ENCODE measurements at regions of chr1 and their contacts with region 1.

Region 1: GRCh38 chr1:212586206-212587015 is 22.1 kb upstream of the ATF3 start:
- DNase-seq: peak; percentile 58
- ATAC-seq: peak; percentile 97
- H3K4me3 ChIP-seq: no peak overlapping the region
- H3K27ac ChIP-seq: peak overlapping the region; percentile 45
- H3K4me1 ChIP-seq: peaks cover 15% of the 10 kb centered on the region
- H3K27me3 ChIP-seq: no peaks in the 10 kb centered on the region
- CTCF ChIP-seq: no peak
- EP300 ChIP-seq: peak; percentile 80 to 83; a peak in 2 of 4 replicates
- POLR2A ChIP-seq: no peak
- RAD21 ChIP-seq: peak; percentile 31; the same call in 1 of the 2 replicates

Region 2: GRCh38 chr1:212558693-212559480 is 27.5 kb before region 1 on chr1:
- CTCF ChIA-PET with region 1: no interaction called
- POLR2A ChIA-PET with region 1: interaction called, 5 read pairs
- RAD21 ChIA-PET with region 1: interaction called, 8 read pairs
- SMC1A ChIA-PET with region 1: interaction called, 10 read pairs
- in situ Hi-C with region 1: no loop called
- intact Hi-C with region 1: no loop called
- DNase-seq: peak; percentile 70
- ATAC-seq: peak; percentile 92
- H3K4me3 ChIP-seq: peak overlapping the region; percentile 73
- H3K27ac ChIP-seq: peak overlapping the region; percentile 76
- H3K4me1 ChIP-seq: peaks cover 8% of the 10 kb centered on the region
- H3K27me3 ChIP-seq: no peaks in the 10 kb centered on the region
- CTCF ChIP-seq: no peak
- EP300 ChIP-seq: peak; percentile 46 to 58; a peak in 2 of 4 replicates
- POLR2A ChIP-seq: peak; percentile 71
- RAD21 ChIP-seq: no peak

Region 3: GRCh38 chr1:212655668-212656423 is 69.4 kb after region 1 on chr1:
- CTCF ChIA-PET with region 1: no interaction called
- POLR2A ChIA-PET with region 1: no interaction called
- RAD21 ChIA-PET with region 1: no interaction called
- SMC1A ChIA-PET with region 1: no interaction called
- in situ Hi-C with region 1: no loop called
- intact Hi-C with region 1: no loop called
- DNase-seq: no peak
- ATAC-seq: no peak
- H3K4me3 ChIP-seq: no peak overlapping the region
- H3K27ac ChIP-seq: no peak overlapping the region
- H3K4me1 ChIP-seq: peaks cover 10% of the 10 kb centered on the region
- H3K27me3 ChIP-seq: no peaks in the 10 kb centered on the region
- CTCF ChIP-seq: no peak
- EP300 ChIP-seq: no peak
- POLR2A ChIP-seq: no peak
- RAD21 ChIP-seq: no peak

Measured in GM12878 (cell line).